Ascending aorta (tissue), 2 donors: ENCODE measurements at regions of chr12 and their contacts with region 1.

Region 1: GRCh38 chr12:116455540-116456329 is 103.4 kb upstream of the MAP1LC3B2 start:
- DNase-seq: peak; percentile 69 to 96
- H3K4me3 ChIP-seq: peak overlapping the region in 1 of 2 donors; percentile 27
- H3K27ac ChIP-seq: peak overlapping the region; percentile 91 to 97
- H3K4me1 ChIP-seq: peaks cover 10 to 16% of the 10 kb centered on the region in 2 donors
- H3K27me3 ChIP-seq: no peaks in the 10 kb centered on the region
- CTCF ChIP-seq: no peak

Region 2: GRCh38 chr12:116319898-116320621 is 135.7 kb before region 1 on chr12:
- intact Hi-C with region 1: loop called (anchors 1 kb)
- DNase-seq: peak; percentile 53 to 95
- H3K4me3 ChIP-seq: peak overlapping the region; percentile 17 to 24
- H3K27ac ChIP-seq: peak overlapping the region; percentile 87 to 89
- H3K4me1 ChIP-seq: peaks cover 11 to 25% of the 10 kb centered on the region in 2 donors
- H3K27me3 ChIP-seq: no peaks in the 10 kb centered on the region
- CTCF ChIP-seq: no peak

Region 3: DNA sequence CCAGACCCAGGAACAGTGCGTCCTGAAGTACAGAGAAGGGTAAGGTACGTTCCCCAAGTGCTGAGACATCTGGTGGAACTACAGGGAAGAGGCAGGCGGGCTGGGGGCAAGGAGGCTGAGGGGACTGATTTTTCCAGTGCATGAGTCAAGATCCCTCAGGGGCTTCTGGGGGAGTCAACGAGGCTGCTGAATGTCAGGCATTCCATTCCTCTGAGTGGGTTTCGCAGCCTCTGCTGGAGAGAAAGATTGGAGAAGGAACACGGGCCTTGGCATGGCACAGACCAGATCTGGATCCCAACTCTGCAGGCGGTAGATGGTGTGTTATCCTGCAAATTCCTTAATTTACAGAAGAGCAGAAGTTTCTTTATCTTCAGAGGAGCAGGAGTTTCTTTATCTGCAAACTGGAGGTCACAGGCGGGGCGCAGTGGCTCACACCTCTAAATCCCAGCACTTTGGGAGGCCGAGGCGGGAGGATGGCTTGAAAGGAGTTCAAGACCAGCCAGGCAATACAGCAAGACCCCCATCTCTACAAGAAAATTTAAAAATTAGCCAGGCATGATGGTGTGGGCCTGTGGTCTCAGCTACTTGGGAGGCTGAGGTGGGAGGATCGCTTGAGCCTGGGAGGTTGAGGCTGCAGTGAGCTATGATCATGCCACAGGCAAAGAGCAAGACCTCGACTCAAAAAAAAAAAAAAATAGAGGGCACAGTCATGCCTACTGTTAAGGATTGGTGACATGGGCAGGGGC is 29.2 kb before region 1 on chr12:
- intact Hi-C with region 1: loop called (anchors 2 kb)
- DNase-seq: peak; percentile 35 to 95
- H3K4me3 ChIP-seq: no peak overlapping the region
- H3K27ac ChIP-seq: peak overlapping the region in 1 of 2 donors; percentile 48
- H3K4me1 ChIP-seq: peaks cover 0 to 11% of the 10 kb centered on the region in 2 donors
- H3K27me3 ChIP-seq: no peaks in the 10 kb centered on the region
- CTCF ChIP-seq: peak; percentile 19 to 55 (median 40)

Region 4: GRCh38 chr12:116434155-116435011 is 21.4 kb before region 1 on chr12:
- intact Hi-C with region 1: loop called (anchors 1 kb)
- DNase-seq: peak; percentile 83 to 97
- H3K4me3 ChIP-seq: peak overlapping the region; percentile 24 to 56
- H3K27ac ChIP-seq: peak overlapping the region; percentile 67 to 74
- H3K4me1 ChIP-seq: peaks cover 4 to 12% of the 10 kb centered on the region in 2 donors
- H3K27me3 ChIP-seq: no peaks in the 10 kb centered on the region
- CTCF ChIP-seq: no peak

Region 5: DNA sequence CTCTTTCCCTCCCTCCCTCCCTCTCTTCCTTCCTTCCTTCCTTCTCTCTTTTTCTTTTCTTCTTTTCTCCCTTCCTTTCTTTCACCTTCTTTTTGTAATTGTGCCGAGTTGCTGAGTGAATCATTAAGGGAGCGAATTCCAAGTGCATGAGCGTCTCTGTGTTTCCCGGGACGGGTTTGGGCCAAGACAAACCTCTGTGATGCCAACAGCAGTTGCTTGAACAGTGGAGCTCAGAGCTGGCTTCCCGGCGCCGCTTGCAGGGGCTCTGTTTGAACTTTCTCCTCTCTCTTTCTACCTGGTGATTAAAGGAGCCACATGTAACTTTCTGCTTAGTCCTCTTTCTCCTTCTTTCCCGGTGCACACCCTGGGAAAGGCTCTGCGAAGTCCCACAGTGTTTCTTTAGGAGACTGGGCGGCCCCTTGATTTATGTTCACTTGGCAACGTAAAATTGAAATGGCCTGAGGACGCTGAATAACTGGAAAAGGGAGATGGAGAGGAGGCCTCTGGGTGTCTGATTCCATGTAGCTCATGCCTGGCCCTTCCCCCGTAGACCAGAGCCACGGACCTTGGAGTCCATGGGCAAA is 69.8 kb after region 1 on chr12:
- intact Hi-C with region 1: loop called (anchors 1 kb)
- DNase-seq: peak; percentile 54 to 92
- H3K4me3 ChIP-seq: peak overlapping the region; percentile 31 to 58
- H3K27ac ChIP-seq: peak overlapping the region; percentile 82 to 83
- H3K4me1 ChIP-seq: peaks cover 2 to 28% of the 10 kb centered on the region in 2 donors
- H3K27me3 ChIP-seq: no peaks in the 10 kb centered on the region
- CTCF ChIP-seq: no peak

Region 6: GRCh38 chr12:116533343-116534251 is 77.9 kb after region 1 on chr12:
- intact Hi-C with region 1: loop called (anchors 2 kb)
- DNase-seq: peak; percentile 30 to 85
- H3K4me3 ChIP-seq: peak overlapping the region; percentile 61 to 84
- H3K27ac ChIP-seq: peak overlapping the region; percentile 62 to 67
- H3K4me1 ChIP-seq: peaks cover 3 to 16% of the 10 kb centered on the region in 2 donors
- H3K27me3 ChIP-seq: no peaks in the 10 kb centered on the region
- CTCF ChIP-seq: no peak

Region 7: GRCh38 chr12:116582610-116583009 is 126.9 kb after region 1 on chr12:
- intact Hi-C with region 1: no loop called
- DNase-seq: no peak
- H3K4me3 ChIP-seq: no peak overlapping the region
- H3K27ac ChIP-seq: no peak overlapping the region
- H3K4me1 ChIP-seq: peaks cover 0 to 3% of the 10 kb centered on the region in 2 donors
- H3K27me3 ChIP-seq: no peaks in the 10 kb centered on the region
- CTCF ChIP-seq: no peak